ENCODE measurements at regions of chr16 and their contacts with region 1.

Region 1: GRCh38 chr16:57167953-57168352 is 17.9 kb downstream of the PSME3IP1 start:
- DNase-seq: peak in 7 of 9 donors; percentile 51 to 80 (median 69)
- ATAC-seq: peak; percentile 91
- H3K4me3 ChIP-seq: no peak overlapping the region
- H3K4me3 Mint-ChIP-seq: peak overlapping the region in 1 of 10 donors; percentile 35
- H3K27ac ChIP-seq: no peak overlapping the region
- H3K27ac Mint-ChIP-seq: peak overlapping the region in 2 of 9 donors; percentile 19 to 61
- H3K4me1 ChIP-seq: peaks cover 0 to 4% of the 10 kb centered on the region in 2 donors
- H3K4me1 Mint-ChIP-seq: peaks cover 5 to 28% (median 15%) of the 10 kb centered on the region in 7 donors
- H3K27me3 ChIP-seq: no peaks in the 10 kb centered on the region
- H3K27me3 Mint-ChIP-seq: no peaks in the 10 kb centered on the region

Region 2: GRCh38 chr16:56789360-56789759 is 378.6 kb before region 1 on chr16:
- CTCF ChIA-PET with region 1: no interaction called
- POLR2A ChIA-PET with region 1: no interaction called
- intact Hi-C with region 1: loop called in 1 of 2 experiments (anchors 5 kb)
- DNase-seq: peak in 3 of 9 donors; percentile 14 to 33 (median 14)
- ATAC-seq: peak; percentile 50
- H3K4me3 ChIP-seq: no peak overlapping the region
- H3K4me3 Mint-ChIP-seq: no peak overlapping the region
- H3K27ac ChIP-seq: no peak overlapping the region
- H3K27ac Mint-ChIP-seq: no peak overlapping the region
- H3K4me1 ChIP-seq: no peaks in the 10 kb centered on the region
- H3K4me1 Mint-ChIP-seq: peaks cover 0 to 10% (median 0%) of the 10 kb centered on the region in 7 donors
- H3K27me3 ChIP-seq: no peaks in the 10 kb centered on the region
- H3K27me3 Mint-ChIP-seq: no peaks in the 10 kb centered on the region

Region 3: GRCh38 chr16:56964243-56965148 is 203.5 kb before region 1 on chr16:
- CTCF ChIA-PET with region 1: interaction called, 21 read pairs
- POLR2A ChIA-PET with region 1: no interaction called
- intact Hi-C with region 1: loop called (anchors 1 kb)
- DNase-seq: peak; percentile 84 to 96 (median 91)
- ATAC-seq: peak; percentile 99
- H3K4me3 ChIP-seq: no peak overlapping the region
- H3K4me3 Mint-ChIP-seq: peak overlapping the region in 4 of 10 donors; percentile 6 to 62 (median 38)
- H3K27ac ChIP-seq: no peak overlapping the region
- H3K27ac Mint-ChIP-seq: peak overlapping the region in 8 of 9 donors; percentile 60 to 91 (median 82)
- H3K4me1 ChIP-seq: peaks cover 7 to 19% of the 10 kb centered on the region in 2 donors
- H3K4me1 Mint-ChIP-seq: peaks cover 21 to 27% (median 23%) of the 10 kb centered on the region in 7 donors
- H3K27me3 ChIP-seq: no peaks in the 10 kb centered on the region
- H3K27me3 Mint-ChIP-seq: peaks cover 0 to 4% (median 0%) of the 10 kb centered on the region in 5 donors

Region 4: GRCh38 chr16:57091975-57092785 is 75.8 kb before region 1 on chr16 and contains the start of gene CPNE2:
- CTCF ChIA-PET with region 1: interaction called, 31 read pairs
- POLR2A ChIA-PET with region 1: interaction called, 7 read pairs
- intact Hi-C with region 1: loop called (anchors 1 kb)
- DNase-seq: peak in 2 of 9 donors; percentile 17 to 29
- ATAC-seq: peak; percentile 63
- H3K4me3 ChIP-seq: peak within 1 kb of the TSS; percentile 50
- H3K4me3 Mint-ChIP-seq: peak within 1 kb of the TSS; percentile 65 to 86 (median 80)
- H3K27ac ChIP-seq: peak within 1 kb of the TSS; percentile 10
- H3K27ac Mint-ChIP-seq: peak within 1 kb of the TSS in 8 of 9 donors; percentile 14 to 78 (median 52)
- H3K4me1 ChIP-seq: peaks cover 0 to 13% of the 10 kb centered on the region in 2 donors
- H3K4me1 Mint-ChIP-seq: peaks cover 8 to 19% (median 10%) of the 10 kb centered on the region in 7 donors
- H3K27me3 ChIP-seq: no peaks in the 10 kb centered on the region
- H3K27me3 Mint-ChIP-seq: peaks cover 0 to 34% (median 0%) of the 10 kb centered on the region in 5 donors
- total RNA-seq, gene CPNE2: 1.1 to 11.7 (median 3.5) TPM

Region 5: DNA sequence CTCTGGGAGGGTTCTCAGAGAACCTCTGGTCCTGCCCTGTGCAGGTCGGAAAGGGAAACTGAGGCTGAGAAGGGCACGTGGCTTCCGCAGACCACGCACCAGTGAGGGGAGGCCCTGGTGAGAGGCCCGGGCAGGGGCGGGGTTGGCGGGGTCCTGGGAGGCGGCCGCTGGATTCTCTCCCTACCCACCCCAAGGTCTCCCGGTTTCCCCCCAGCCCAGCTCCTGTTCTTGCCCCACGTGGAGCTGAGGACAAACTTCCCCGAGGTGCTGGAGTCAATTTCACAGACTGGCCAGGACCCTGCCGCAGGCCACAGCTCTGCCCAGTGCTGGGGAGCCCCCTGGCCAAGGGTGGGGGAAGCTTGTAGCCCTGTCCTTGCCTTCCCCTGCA is 248.2 kb after region 1 on chr16:
- CTCF ChIA-PET with region 1: interaction called, 4 read pairs
- POLR2A ChIA-PET with region 1: no interaction called
- intact Hi-C with region 1: loop called in 1 of 2 experiments (anchors 5 kb)
- DNase-seq: no peak
- ATAC-seq: no peak
- H3K4me3 ChIP-seq: no peak overlapping the region
- H3K4me3 Mint-ChIP-seq: no peak overlapping the region
- H3K27ac ChIP-seq: no peak overlapping the region
- H3K27ac Mint-ChIP-seq: no peak overlapping the region
- H3K4me1 ChIP-seq: peaks cover 11 to 18% of the 10 kb centered on the region in 2 donors
- H3K4me1 Mint-ChIP-seq: peaks cover 17 to 29% (median 23%) of the 10 kb centered on the region in 7 donors
- H3K27me3 ChIP-seq: no peaks in the 10 kb centered on the region
- H3K27me3 Mint-ChIP-seq: no peaks in the 10 kb centered on the region

Region 6: GRCh38 chr16:57447186-57447962 is 279.4 kb after region 1 on chr16 and contains the starts of genes CIAPIN1 and COQ9:
- CTCF ChIA-PET with region 1: no interaction called
- POLR2A ChIA-PET with region 1: no interaction called
- intact Hi-C with region 1: no loop called
- DNase-seq: peak; percentile 83 to 94 (median 88)
- ATAC-seq: peak; percentile 99
- H3K4me3 ChIP-seq: peak within 1 kb of the TSS; percentile 84
- H3K4me3 Mint-ChIP-seq: peak within 1 kb of the TSS; percentile 90 to 97 (median 92)
- H3K27ac ChIP-seq: peak within 1 kb of the TSS; percentile 87
- H3K27ac Mint-ChIP-seq: peak within 1 kb of the TSS; percentile 75 to 96 (median 90)
- H3K4me1 ChIP-seq: peaks cover 7 to 17% of the 10 kb centered on the region in 2 donors
- H3K4me1 Mint-ChIP-seq: peaks cover 15 to 64% (median 45%) of the 10 kb centered on the region in 7 donors
- H3K27me3 ChIP-seq: no peaks in the 10 kb centered on the region
- H3K27me3 Mint-ChIP-seq: no peaks in the 10 kb centered on the region
- total RNA-seq, gene CIAPIN1: 33.6 to 52.8 (median 35.8) TPM
- total RNA-seq, gene COQ9: 16.4 to 45.4 (median 36.6) TPM

Measured in naive thymus-derived CD4-positive, alpha-beta T cell (primary cell).